ENCODE measurements at regions of chr2 and their contacts with region 1.

Region 1: DNA sequence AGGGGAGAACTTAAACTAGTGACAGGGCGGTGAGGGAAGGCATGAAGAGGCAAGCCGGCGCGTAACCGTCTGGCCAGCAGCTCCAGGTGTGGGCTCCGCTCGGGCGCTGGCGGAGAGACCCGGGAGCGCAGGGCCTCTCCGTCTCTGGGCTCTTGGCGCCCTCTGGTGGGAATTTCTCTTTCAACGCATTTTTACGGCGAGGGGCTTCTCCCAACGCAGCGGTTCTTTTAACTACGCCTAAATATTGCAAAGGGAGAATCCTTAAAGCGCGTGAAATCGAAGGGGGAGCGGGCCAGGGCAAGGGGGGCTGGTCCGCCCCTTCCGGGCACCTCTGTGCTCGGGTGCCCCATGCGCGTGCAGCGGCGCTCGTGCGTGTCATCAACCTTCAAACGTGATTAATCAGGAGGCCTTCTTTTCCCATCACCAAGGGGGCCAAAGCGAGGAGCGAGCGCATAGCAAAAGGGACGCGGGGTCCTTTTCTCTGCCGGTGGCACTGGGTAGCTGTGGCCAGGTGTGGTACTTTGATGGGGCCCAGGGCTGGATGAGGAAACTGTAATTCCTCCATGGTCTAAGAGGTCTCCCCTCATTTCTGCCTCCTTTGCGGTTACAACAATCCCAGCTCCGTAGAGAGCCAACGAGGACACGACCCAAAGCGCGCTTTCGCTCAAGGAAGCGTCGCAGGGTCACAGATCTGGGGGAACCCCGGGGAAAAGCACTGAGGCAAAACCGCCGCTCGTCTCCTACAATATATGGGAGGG is 762 bp upstream of the GAD1 start:
- DNase-seq: peak; percentile 45
- ATAC-seq: peak; percentile 44
- H3K4me3 Mint-ChIP-seq: peak overlapping the region; percentile 70
- H3K27ac Mint-ChIP-seq: no peak overlapping the region
- H3K4me1 Mint-ChIP-seq: peaks cover 50% of the 10 kb centered on the region
- H3K27me3 Mint-ChIP-seq: peaks cover 64% of the 10 kb centered on the region
- CTCF ChIP-seq: no peak

Region 2: GRCh38 chr2:169363560-169364150 is 1452.3 kb before region 1 on chr2:
- CTCF ChIA-PET with region 1: no interaction called
- POLR2A ChIA-PET with region 1: no interaction called
- intact Hi-C with region 1: loop called (anchors 5 kb)
- DNase-seq: peak; percentile 18
- ATAC-seq: peak; percentile 67
- H3K4me3 Mint-ChIP-seq: peak overlapping the region; percentile 88
- H3K27ac Mint-ChIP-seq: no peak overlapping the region
- H3K4me1 Mint-ChIP-seq: peaks cover 38% of the 10 kb centered on the region
- H3K27me3 Mint-ChIP-seq: peaks cover 41% of the 10 kb centered on the region
- CTCF ChIP-seq: no peak

Region 3: DNA sequence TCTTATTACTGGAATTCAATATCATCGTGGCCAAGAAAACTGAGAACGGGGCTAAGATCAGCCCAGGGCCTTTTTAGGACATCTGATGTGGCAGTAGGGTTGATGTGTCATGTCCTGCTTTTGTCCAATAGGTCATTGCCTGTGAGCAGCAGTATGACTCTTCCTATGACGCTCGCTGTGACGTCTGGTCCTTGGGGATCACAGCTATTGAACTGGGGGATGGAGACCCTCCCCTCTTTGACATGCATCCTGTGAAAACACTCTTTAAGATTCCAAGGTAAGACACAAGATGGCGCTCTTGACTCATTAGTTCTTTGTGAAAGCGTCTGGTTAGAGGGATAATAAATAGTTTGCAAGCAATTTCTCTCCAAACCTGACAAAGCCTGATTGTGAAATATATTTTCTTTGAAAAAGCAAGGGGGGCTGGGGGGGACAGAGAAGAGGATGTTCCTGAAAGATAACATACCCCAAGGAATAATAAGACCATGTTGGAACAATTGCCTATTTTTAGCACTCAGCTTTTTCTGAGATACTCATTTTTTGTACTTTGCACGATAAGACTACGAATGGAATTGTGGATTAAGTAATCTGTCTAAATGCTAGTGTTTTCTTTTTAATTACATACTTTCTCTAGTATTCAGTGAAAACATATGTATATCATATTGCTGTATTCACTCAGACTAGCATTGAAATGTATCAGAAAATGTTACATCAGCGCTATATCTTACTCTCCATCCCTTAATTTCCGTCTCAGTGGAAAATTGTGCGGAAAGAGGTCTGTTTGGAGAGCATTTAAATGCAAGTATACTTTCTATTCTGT is 579.9 kb before region 1 on chr2:
- CTCF ChIA-PET with region 1: no interaction called
- POLR2A ChIA-PET with region 1: no interaction called
- intact Hi-C with region 1: loop called (anchors 2 kb)
- DNase-seq: no peak
- ATAC-seq: no peak
- H3K4me3 Mint-ChIP-seq: no peak overlapping the region
- H3K27ac Mint-ChIP-seq: no peak overlapping the region
- H3K4me1 Mint-ChIP-seq: no peaks in the 10 kb centered on the region
- H3K27me3 Mint-ChIP-seq: peaks cover 8% of the 10 kb centered on the region
- CTCF ChIP-seq: no peak

Region 4: GRCh38 chr2:170361090-170361936 is 454.6 kb before region 1 on chr2:
- CTCF ChIA-PET with region 1: interaction called, 12 read pairs
- POLR2A ChIA-PET with region 1: no interaction called
- intact Hi-C with region 1: loop called (anchors 1 kb)
- DNase-seq: no peak
- ATAC-seq: no peak
- H3K4me3 Mint-ChIP-seq: no peak overlapping the region
- H3K27ac Mint-ChIP-seq: no peak overlapping the region
- H3K4me1 Mint-ChIP-seq: no peaks in the 10 kb centered on the region
- H3K27me3 Mint-ChIP-seq: peaks cover 18% of the 10 kb centered on the region
- CTCF ChIP-seq: no peak

Region 5: DNA sequence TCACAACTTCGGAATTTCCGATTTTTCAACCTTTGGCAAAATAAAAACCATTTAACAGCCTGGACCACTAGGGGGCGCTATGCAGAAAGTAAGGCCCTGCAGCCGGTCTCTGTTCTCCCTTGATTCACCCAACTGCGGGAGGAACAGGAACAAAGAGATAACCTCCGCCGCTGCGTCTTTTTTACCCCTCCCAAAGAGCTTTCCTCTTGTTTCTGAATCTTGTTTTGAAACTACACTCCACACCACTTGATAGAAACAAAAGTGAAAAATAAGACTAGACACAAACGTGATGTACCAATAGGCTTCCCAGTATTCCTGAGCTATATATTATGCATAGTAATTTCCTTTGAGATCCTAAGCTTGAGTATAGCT is 406.8 kb before region 1 on chr2:
- CTCF ChIA-PET with region 1: interaction called, 15 read pairs
- POLR2A ChIA-PET with region 1: interaction called, 7 read pairs
- intact Hi-C with region 1: loop called (anchors 1 kb)
- DNase-seq: no peak
- ATAC-seq: no peak
- H3K4me3 Mint-ChIP-seq: no peak overlapping the region
- H3K27ac Mint-ChIP-seq: no peak overlapping the region
- H3K4me1 Mint-ChIP-seq: peaks cover 16% of the 10 kb centered on the region
- H3K27me3 Mint-ChIP-seq: peaks cover 23% of the 10 kb centered on the region
- CTCF ChIP-seq: no peak

Region 6: GRCh38 chr2:170770606-170771420 is 45.1 kb before region 1 on chr2:
- CTCF ChIA-PET with region 1: interaction called, 9 read pairs
- POLR2A ChIA-PET with region 1: interaction called, 3 read pairs
- intact Hi-C with region 1: loop called (anchors 2 kb)
- DNase-seq: peak; percentile 49
- ATAC-seq: peak; percentile 89
- H3K4me3 Mint-ChIP-seq: peak overlapping the region; percentile 87
- H3K27ac Mint-ChIP-seq: no peak overlapping the region
- H3K4me1 Mint-ChIP-seq: peaks cover 14% of the 10 kb centered on the region
- H3K27me3 Mint-ChIP-seq: peaks cover 23% of the 10 kb centered on the region
- CTCF ChIP-seq: no peak

Measured in activated B cell treated with CpG ODN at 0.5 μM for 24 hours (primary cell).